ENCODE measurements at regions of chr14 and their contacts with region 1.

Region 1: DNA sequence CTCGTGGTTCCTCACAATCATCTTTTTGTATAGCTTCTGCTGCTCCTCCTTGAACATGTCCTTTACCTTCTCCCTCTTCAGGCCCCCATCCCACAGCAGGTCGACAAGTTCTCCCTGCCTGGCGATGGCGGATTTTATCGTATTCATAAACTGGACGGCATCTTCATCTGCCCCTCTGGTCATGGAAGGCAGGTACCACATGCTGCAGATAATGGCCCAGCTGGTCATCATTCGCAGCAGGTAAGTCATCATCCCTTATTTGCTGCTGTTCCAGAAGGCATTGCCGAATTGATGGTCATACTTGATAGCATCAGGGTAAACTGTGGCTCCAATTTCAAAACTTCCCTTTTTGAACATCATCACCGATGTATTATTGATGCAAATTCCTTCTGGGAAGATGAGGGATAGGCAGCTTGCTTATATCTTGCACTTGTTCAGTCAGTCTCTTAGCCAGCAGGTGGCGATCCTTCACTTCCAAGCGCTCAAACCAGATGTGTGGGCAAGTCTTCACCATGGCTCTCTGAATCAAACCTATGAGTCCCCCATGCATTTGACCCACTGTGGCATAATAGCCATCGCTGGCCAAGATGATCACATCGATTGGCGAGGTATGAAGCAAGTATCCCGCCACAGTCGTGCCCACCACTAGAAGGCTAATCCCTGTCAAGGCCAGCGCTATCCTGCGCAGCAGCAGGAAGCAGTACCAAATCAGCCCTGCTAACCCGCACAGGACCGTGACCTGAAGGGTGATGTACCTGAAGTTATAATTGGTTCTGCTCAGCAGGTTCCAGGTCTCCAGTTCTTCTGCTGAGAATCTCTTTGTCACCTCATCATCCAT is 381.5 kb upstream of the STXBP6 start:
- DNase-seq: peak; percentile 69
- ATAC-seq: peak; percentile 92
- H3K4me3 Mint-ChIP-seq: no peak overlapping the region
- H3K27ac Mint-ChIP-seq: no peak overlapping the region
- H3K4me1 Mint-ChIP-seq: peaks cover 11% of the 10 kb centered on the region
- H3K27me3 Mint-ChIP-seq: no peaks in the 10 kb centered on the region
- CTCF ChIP-seq: peak; percentile 49; the same call in 1 of the 2 replicates

Region 2: GRCh38 chr14:25340882-25341281 is 90.5 kb before region 1 on chr14:
- CTCF ChIA-PET with region 1: no interaction called
- POLR2A ChIA-PET with region 1: no interaction called
- DNase-seq: no peak
- ATAC-seq: no peak
- H3K4me3 Mint-ChIP-seq: no peak overlapping the region
- H3K27ac Mint-ChIP-seq: no peak overlapping the region
- H3K4me1 Mint-ChIP-seq: no peaks in the 10 kb centered on the region
- H3K27me3 Mint-ChIP-seq: no peaks in the 10 kb centered on the region; the same call in 1 of the 2 replicates
- CTCF ChIP-seq: no peak

Region 3: GRCh38 chr14:25389948-25390347 is 41.5 kb before region 1 on chr14:
- CTCF ChIA-PET with region 1: no interaction called
- POLR2A ChIA-PET with region 1: no interaction called
- DNase-seq: no peak
- ATAC-seq: no peak
- H3K4me3 Mint-ChIP-seq: no peak overlapping the region
- H3K27ac Mint-ChIP-seq: no peak overlapping the region
- H3K4me1 Mint-ChIP-seq: peaks cover 10% of the 10 kb centered on the region
- H3K27me3 Mint-ChIP-seq: no peaks in the 10 kb centered on the region
- CTCF ChIP-seq: no peak

Region 4: GRCh38 chr14:25400607-25401206 is 30.7 kb before region 1 on chr14:
- CTCF ChIA-PET with region 1: no interaction called
- POLR2A ChIA-PET with region 1: no interaction called
- DNase-seq: peak; percentile 49
- ATAC-seq: peak; percentile 59
- H3K4me3 Mint-ChIP-seq: no peak overlapping the region
- H3K27ac Mint-ChIP-seq: no peak overlapping the region
- H3K4me1 Mint-ChIP-seq: peaks cover 6% of the 10 kb centered on the region
- H3K27me3 Mint-ChIP-seq: no peaks in the 10 kb centered on the region
- CTCF ChIP-seq: peak; percentile 58

Region 5: DNA sequence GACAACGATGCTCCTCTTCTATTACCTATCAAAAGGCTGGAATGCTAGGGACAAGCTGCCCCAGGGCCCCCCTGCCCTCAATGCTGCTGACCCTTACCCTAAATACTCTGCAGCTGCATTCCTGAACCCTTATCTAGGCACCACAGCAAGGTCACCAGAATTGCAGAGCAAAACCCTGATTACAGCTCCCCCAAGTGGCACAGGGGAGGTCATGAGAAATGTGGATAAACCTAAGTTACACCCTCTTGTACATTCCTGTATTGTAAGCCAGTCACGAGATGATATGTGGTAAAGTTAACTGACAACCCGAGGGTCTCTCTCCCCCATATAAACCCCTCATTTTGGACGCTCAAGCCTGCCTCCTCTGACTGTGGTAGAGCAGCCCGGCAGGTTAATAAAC is 30.4 kb after region 1 on chr14:
- CTCF ChIA-PET with region 1: interaction called, 10 read pairs
- POLR2A ChIA-PET with region 1: no interaction called
- DNase-seq: peak; percentile 15
- ATAC-seq: 0 out of 2 replicates have a peak, but pooled peaks have one; percentile 36
- H3K4me3 Mint-ChIP-seq: no peak overlapping the region
- H3K27ac Mint-ChIP-seq: no peak overlapping the region
- H3K4me1 Mint-ChIP-seq: peaks cover 29% of the 10 kb centered on the region
- H3K27me3 Mint-ChIP-seq: no peaks in the 10 kb centered on the region; the same call in 1 of the 2 replicates
- CTCF ChIP-seq: peak; percentile 24; the same call in 1 of the 2 replicates

Region 6: GRCh38 chr14:25484235-25484634 is 52.8 kb after region 1 on chr14:
- CTCF ChIA-PET with region 1: interaction called, 10 read pairs
- POLR2A ChIA-PET with region 1: no interaction called
- DNase-seq: no peak
- ATAC-seq: no peak
- H3K4me3 Mint-ChIP-seq: no peak overlapping the region
- H3K27ac Mint-ChIP-seq: no peak overlapping the region
- H3K4me1 Mint-ChIP-seq: peaks cover 9% of the 10 kb centered on the region
- H3K27me3 Mint-ChIP-seq: no peaks in the 10 kb centered on the region
- CTCF ChIP-seq: no peak